ENCODE measurements at regions of chr16 and their contacts with region 1.

Region 1: DNA sequence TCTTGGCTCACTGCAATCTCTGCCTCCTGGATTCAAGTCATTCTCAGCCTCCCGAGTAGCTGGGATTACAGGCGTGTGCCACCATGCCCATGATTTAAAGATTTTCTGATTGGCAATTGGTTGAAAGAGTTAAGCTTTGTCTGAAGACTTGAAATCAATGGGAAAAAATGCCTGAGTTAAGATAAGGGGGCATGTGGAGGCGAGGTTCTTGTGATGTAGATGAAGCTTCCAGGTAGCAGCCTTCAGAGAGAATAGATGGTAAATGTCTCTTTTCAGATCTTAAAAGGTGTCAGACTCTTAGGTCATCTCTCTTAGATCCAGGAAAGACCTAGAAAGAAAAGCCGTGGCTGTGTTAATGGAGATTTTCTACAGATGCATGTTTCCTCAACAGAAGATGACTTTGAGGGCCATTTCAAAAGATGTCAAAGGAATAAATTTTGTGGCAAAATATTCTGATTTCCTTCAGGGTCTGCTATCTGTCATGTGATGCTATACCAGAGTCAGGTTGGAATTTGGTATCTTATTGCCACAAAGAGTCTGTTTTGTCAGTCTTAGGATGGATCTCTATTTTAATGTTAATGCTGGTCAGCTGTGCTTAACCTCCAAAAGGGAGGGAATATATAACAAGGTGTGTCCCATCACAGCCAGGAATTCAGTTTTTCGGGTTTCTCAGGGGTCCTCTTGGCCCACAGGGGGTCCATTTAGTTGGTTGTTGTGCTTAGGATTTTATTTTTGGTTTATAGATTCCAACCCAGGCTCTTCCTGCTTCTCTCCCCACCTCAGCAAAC is 58.3 kb upstream of the AKTIP start:
- DNase-seq: no peak
- ATAC-seq: no peak
- H3K4me3 ChIP-seq: no peak overlapping the region
- H3K4me3 Mint-ChIP-seq: no peak overlapping the region
- H3K27ac ChIP-seq: no peak overlapping the region
- H3K27ac Mint-ChIP-seq: no peak overlapping the region
- H3K4me1 ChIP-seq: no peaks in the 10 kb centered on the region
- H3K4me1 Mint-ChIP-seq: no peaks in the 10 kb centered on the region
- H3K27me3 ChIP-seq: no peaks in the 10 kb centered on the region
- H3K27me3 Mint-ChIP-seq: peaks cover 10% of the 10 kb centered on the region
- CTCF ChIP-seq: no peak

Region 2: DNA sequence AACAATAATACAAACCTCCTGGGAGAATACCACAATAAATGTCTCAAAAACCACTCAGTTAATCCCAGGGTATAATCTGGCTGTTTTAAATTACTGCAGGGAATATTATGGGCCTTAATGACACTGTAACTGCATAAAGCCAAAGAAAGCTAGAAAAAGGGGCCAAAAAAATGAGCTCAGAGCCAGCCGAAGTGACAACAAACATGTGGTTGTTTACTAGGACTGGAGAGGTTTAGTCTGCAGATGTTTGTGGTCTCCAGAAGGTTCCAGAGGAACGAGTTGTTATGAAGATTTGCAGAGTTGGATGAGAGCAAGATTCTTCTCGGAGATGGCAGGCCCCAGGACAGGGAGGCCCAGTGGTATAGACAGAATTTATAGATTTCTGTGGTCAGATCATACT is 38.8 kb after region 1 on chr16:
- CTCF ChIA-PET with region 1: no interaction called
- POLR2A ChIA-PET with region 1: no interaction called
- intact Hi-C with region 1: no loop called
- DNase-seq: no peak
- ATAC-seq: no peak
- H3K4me3 ChIP-seq: no peak overlapping the region
- H3K4me3 Mint-ChIP-seq: no peak overlapping the region
- H3K27ac ChIP-seq: no peak overlapping the region
- H3K27ac Mint-ChIP-seq: no peak overlapping the region
- H3K4me1 ChIP-seq: no peaks in the 10 kb centered on the region
- H3K4me1 Mint-ChIP-seq: no peaks in the 10 kb centered on the region
- H3K27me3 ChIP-seq: no peaks in the 10 kb centered on the region
- H3K27me3 Mint-ChIP-seq: no peaks in the 10 kb centered on the region
- CTCF ChIP-seq: no peak

Region 3: GRCh38 chr16:53945996-53946395 is 384.7 kb after region 1 on chr16:
- CTCF ChIA-PET with region 1: no interaction called
- POLR2A ChIA-PET with region 1: interaction called, 10 read pairs
- intact Hi-C with region 1: no loop called
- DNase-seq: peak; percentile 32
- ATAC-seq: no peak
- H3K4me3 ChIP-seq: no peak overlapping the region
- H3K4me3 Mint-ChIP-seq: no peak overlapping the region
- H3K27ac ChIP-seq: no peak overlapping the region
- H3K27ac Mint-ChIP-seq: no peak overlapping the region
- H3K4me1 ChIP-seq: peaks cover 5 to 8% of the 10 kb centered on the region in 2 donors
- H3K4me1 Mint-ChIP-seq: peaks cover 26% of the 10 kb centered on the region
- H3K27me3 ChIP-seq: no peaks in the 10 kb centered on the region
- H3K27me3 Mint-ChIP-seq: no peaks in the 10 kb centered on the region
- CTCF ChIP-seq: peak; percentile 70

Measured in B cell (primary cell).